ENCODE measurements at regions of chr11 and their contacts with region 1.

Region 1: DNA sequence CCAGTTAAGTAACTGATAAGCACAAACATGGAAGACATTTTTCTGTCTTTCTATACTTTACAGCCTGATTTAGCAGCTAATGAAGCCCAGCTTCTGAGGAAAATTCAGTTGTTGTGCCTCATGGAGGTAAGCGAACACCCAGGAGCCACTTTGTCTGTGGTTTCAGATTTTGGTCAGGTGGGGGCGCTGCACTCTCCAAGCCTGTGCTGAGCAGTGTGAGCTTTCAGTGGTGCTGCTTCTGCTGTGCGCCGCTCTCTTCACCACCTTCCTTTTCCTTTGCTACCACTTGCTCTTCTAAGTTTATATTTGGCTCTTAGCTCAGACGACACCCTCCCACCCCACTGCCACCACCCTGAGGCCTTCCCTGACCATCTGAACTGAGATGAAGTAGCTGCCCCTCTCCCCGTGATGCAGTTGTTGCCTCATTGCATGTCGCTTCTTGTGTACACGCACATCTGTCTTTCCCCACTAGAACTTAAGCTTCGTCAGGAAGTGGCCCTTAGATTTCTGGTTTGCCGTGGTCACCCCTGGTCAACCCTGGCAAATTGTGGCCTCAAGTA is 14.0 kb downstream of the PSMD13 start:
- DNase-seq: peak; percentile 72 to 87 (median 83)
- ATAC-seq: peak; percentile 99
- H3K4me3 ChIP-seq: no peak overlapping the region
- H3K4me3 Mint-ChIP-seq: peak overlapping the region in 1 of 10 donors; percentile 20
- H3K27ac ChIP-seq: peak overlapping the region; percentile 32
- H3K27ac Mint-ChIP-seq: peak overlapping the region; percentile 59 to 91 (median 66)
- H3K4me1 ChIP-seq: peaks cover 0 to 3% of the 10 kb centered on the region in 2 donors
- H3K4me1 Mint-ChIP-seq: peaks cover 9 to 18% (median 13%) of the 10 kb centered on the region in 7 donors
- H3K27me3 ChIP-seq: no peaks in the 10 kb centered on the region
- H3K27me3 Mint-ChIP-seq: peaks cover 0 to 3% (median 0%) of the 10 kb centered on the region in 5 donors

Region 2: GRCh38 chr11:269146-269890 is 18.5 kb after region 1 on chr11:
- CTCF ChIA-PET with region 1: interaction called, 31 read pairs
- POLR2A ChIA-PET with region 1: interaction called, 40 read pairs
- intact Hi-C with region 1: loop called (anchors 1 to 2 kb)
- DNase-seq: peak; percentile 43 to 95 (median 88)
- ATAC-seq: peak; percentile 84
- H3K4me3 ChIP-seq: peak overlapping the region; percentile 59
- H3K4me3 Mint-ChIP-seq: peak overlapping the region; percentile 85 to 96 (median 90)
- H3K27ac ChIP-seq: peak overlapping the region; percentile 80
- H3K27ac Mint-ChIP-seq: peak overlapping the region; percentile 92 to 100 (median 99)
- H3K4me1 ChIP-seq: peaks cover 24 to 26% of the 10 kb centered on the region in 2 donors
- H3K4me1 Mint-ChIP-seq: peaks cover 20 to 47% (median 35%) of the 10 kb centered on the region in 7 donors
- H3K27me3 ChIP-seq: no peaks in the 10 kb centered on the region
- H3K27me3 Mint-ChIP-seq: peaks cover 0 to 8% (median 0%) of the 10 kb centered on the region in 5 donors

Region 3: GRCh38 chr11:288328-289144 is 37.7 kb after region 1 on chr11 and contains the start of gene PGGHG:
- CTCF ChIA-PET with region 1: interaction called, 10 read pairs
- POLR2A ChIA-PET with region 1: interaction called, 27 read pairs
- intact Hi-C with region 1: loop called (anchors 1 to 5 kb)
- DNase-seq: peak in 5 of 9 donors; percentile 40 to 72 (median 49)
- ATAC-seq: peak; percentile 65
- H3K4me3 ChIP-seq: peak within 1 kb of the TSS; percentile 64
- H3K4me3 Mint-ChIP-seq: peak within 1 kb of the TSS; percentile 88 to 100 (median 98)
- H3K27ac ChIP-seq: peak within 1 kb of the TSS; percentile 100
- H3K27ac Mint-ChIP-seq: peak within 1 kb of the TSS; percentile 89 to 100 (median 98)
- H3K4me1 ChIP-seq: peaks cover 16% of the 10 kb centered on the region in 2 donors
- H3K4me1 Mint-ChIP-seq: peaks cover 22 to 52% (median 38%) of the 10 kb centered on the region in 7 donors
- H3K27me3 ChIP-seq: no peaks in the 10 kb centered on the region
- H3K27me3 Mint-ChIP-seq: peaks cover 0 to 14% (median 0%) of the 10 kb centered on the region in 5 donors
- total RNA-seq, gene PGGHG: 325 to 656 (median 348) TPM

Region 4: GRCh38 chr11:299951-300735 is 49.3 kb after region 1 on chr11:
- CTCF ChIA-PET with region 1: interaction called, 49 read pairs
- POLR2A ChIA-PET with region 1: interaction called, 5 read pairs
- intact Hi-C with region 1: loop called in 1 of 2 experiments (anchors 1 kb)
- DNase-seq: peak in 1 of 9 donors; percentile 52
- ATAC-seq: peak; percentile 57
- H3K4me3 ChIP-seq: no peak overlapping the region
- H3K4me3 Mint-ChIP-seq: no peak overlapping the region
- H3K27ac ChIP-seq: no peak overlapping the region
- H3K27ac Mint-ChIP-seq: peak overlapping the region in 6 of 9 donors; percentile 7 to 78 (median 51)
- H3K4me1 ChIP-seq: peaks cover 19 to 31% of the 10 kb centered on the region in 2 donors
- H3K4me1 Mint-ChIP-seq: peaks cover 15 to 48% (median 22%) of the 10 kb centered on the region in 7 donors
- H3K27me3 ChIP-seq: no peaks in the 10 kb centered on the region
- H3K27me3 Mint-ChIP-seq: peaks cover 0 to 12% (median 0%) of the 10 kb centered on the region in 5 donors

Region 5: DNA sequence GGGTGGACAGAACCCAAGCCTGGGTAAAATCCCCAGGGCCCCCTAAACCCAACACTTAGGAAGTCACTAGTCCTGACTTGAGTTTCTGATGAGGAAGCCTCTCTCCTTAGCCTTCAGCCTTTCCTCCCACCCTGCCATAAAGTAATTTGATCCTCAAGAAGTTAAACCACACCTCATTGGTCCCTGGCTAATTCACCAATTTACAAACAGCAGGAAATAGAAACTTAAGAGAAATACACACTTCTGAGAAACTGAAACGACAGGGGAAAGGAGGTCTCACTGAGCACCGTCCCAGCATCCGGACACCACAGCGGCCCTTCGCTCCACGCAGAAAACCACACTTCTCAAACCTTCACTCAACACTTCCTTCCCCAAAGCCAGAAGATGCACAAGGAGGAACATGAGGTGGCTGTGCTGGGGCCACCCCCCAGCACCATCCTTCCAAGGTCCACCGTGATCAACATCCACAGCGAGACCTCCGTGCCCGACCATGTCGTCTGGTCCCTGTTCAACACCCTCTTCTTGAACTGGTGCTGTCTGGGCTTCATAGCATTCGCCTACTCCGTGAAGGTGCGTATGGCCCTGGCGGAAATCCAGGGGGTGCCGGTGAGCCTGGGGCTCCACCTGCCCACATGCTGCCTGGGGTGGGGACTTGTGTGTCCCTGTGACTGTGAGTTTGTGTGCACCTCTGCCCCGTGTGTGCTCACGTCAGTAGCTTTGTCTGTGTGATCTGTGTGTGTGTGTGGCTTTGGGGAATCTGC is 63.1 kb after region 1 on chr11 and contains the start of gene IFITM1:
- CTCF ChIA-PET with region 1: interaction called, 16 read pairs
- POLR2A ChIA-PET with region 1: interaction called, 9 read pairs
- intact Hi-C with region 1: loop called in 1 of 2 experiments (anchors 2 kb)
- DNase-seq: peak in 8 of 9 donors; percentile 55 to 80 (median 76)
- ATAC-seq: peak; percentile 72
- H3K4me3 ChIP-seq: peak within 1 kb of the TSS; percentile 71
- H3K4me3 Mint-ChIP-seq: peak within 1 kb of the TSS; percentile 88 to 100 (median 96)
- H3K27ac ChIP-seq: peak within 1 kb of the TSS; percentile 95
- H3K27ac Mint-ChIP-seq: peak within 1 kb of the TSS; percentile 94 to 99 (median 99)
- H3K4me1 ChIP-seq: peaks cover 13 to 37% of the 10 kb centered on the region in 2 donors
- H3K4me1 Mint-ChIP-seq: peaks cover 26 to 43% (median 34%) of the 10 kb centered on the region in 7 donors
- H3K27me3 ChIP-seq: no peaks in the 10 kb centered on the region
- H3K27me3 Mint-ChIP-seq: peaks cover 0 to 3% (median 0%) of the 10 kb centered on the region in 5 donors
- total RNA-seq, gene IFITM1: 97.4 to 985 (median 241) TPM

Region 6: GRCh38 chr11:363948-364761 is 113.3 kb after region 1 on chr11:
- CTCF ChIA-PET with region 1: interaction called, 38 read pairs
- POLR2A ChIA-PET with region 1: interaction called, 7 read pairs
- intact Hi-C with region 1: loop called (anchors 1 to 5 kb)
- DNase-seq: peak in 8 of 9 donors; percentile 47 to 63 (median 54)
- ATAC-seq: peak; percentile 84
- H3K4me3 ChIP-seq: no peak overlapping the region
- H3K4me3 Mint-ChIP-seq: no peak overlapping the region
- H3K27ac ChIP-seq: no peak overlapping the region
- H3K27ac Mint-ChIP-seq: no peak overlapping the region
- H3K4me1 ChIP-seq: peaks cover 10 to 14% of the 10 kb centered on the region in 2 donors
- H3K4me1 Mint-ChIP-seq: peaks cover 0 to 27% (median 17%) of the 10 kb centered on the region in 7 donors
- H3K27me3 ChIP-seq: peaks cover 3 to 7% of the 10 kb centered on the region in 2 donors
- H3K27me3 Mint-ChIP-seq: peaks cover 10 to 33% (median 23%) of the 10 kb centered on the region in 5 donors

Region 7: DNA sequence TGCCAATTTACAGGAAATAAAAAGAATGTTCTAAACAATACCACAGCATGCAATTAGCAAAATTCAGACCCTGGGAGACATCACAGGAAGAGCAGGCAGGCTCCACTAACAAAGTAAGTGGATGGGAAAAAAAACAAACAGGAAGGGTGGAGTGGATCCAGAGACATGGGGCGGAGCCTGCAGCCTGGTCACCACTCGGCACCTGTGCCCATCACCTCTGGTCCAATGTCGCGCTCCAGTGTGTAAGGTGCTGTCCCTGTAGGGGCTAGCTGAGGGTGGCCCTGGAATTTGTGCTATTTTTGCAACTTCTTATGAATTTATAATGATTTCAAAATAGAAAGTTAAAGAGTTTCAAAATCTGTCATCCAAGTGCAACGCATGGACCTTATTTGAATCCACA is 1246.8 kb after region 1 on chr11:
- CTCF ChIA-PET with region 1: no interaction called
- POLR2A ChIA-PET with region 1: no interaction called
- intact Hi-C with region 1: no loop called
- DNase-seq: no peak
- ATAC-seq: no peak
- H3K4me3 ChIP-seq: no peak overlapping the region
- H3K4me3 Mint-ChIP-seq: peak overlapping the region in 2 of 10 donors; percentile 28 to 39
- H3K27ac ChIP-seq: no peak overlapping the region
- H3K27ac Mint-ChIP-seq: no peak overlapping the region
- H3K4me1 ChIP-seq: peaks cover 0 to 4% of the 10 kb centered on the region in 2 donors
- H3K4me1 Mint-ChIP-seq: peaks cover 25 to 83% (median 74%) of the 10 kb centered on the region in 7 donors
- H3K27me3 ChIP-seq: no peaks in the 10 kb centered on the region
- H3K27me3 Mint-ChIP-seq: no peaks in the 10 kb centered on the region

Measured in naive thymus-derived CD4-positive, alpha-beta T cell (primary cell).